CD4-positive, alpha-beta T cell (primary cell): ENCODE measurements at regions of chr2 and their contacts with region 1.

Region 1: GRCh38 chr2:70137519-70137918 is 50.2 kb downstream of the PCBP1 start:
- DNase-seq: peak in 5 of 14 experiments; percentile 20 to 60 (median 53)
- ATAC-seq: no peak
- H3K4me3 ChIP-seq: no peak overlapping the region
- H3K4me3 Mint-ChIP-seq: peak overlapping the region; percentile 88
- H3K27ac ChIP-seq: peak overlapping the region; percentile 39 to 62
- H3K27ac Mint-ChIP-seq: peak overlapping the region; percentile 96
- H3K4me1 ChIP-seq: peaks cover 95% of the 10 kb centered on the region
- H3K4me1 Mint-ChIP-seq: peaks cover 82% of the 10 kb centered on the region
- H3K27me3 ChIP-seq: no peaks in the 10 kb centered on the region
- H3K27me3 Mint-ChIP-seq: no peaks in the 10 kb centered on the region
- CTCF ChIP-seq: no peak

Region 2: GRCh38 chr2:70124983-70125480 is 12.5 kb before region 1 on chr2:
- CTCF ChIA-PET with region 1: interaction called, 23 read pairs
- POLR2A ChIA-PET with region 1: interaction called, 382 read pairs
- intact Hi-C with region 1: loop called (anchors 1 kb)
- DNase-seq: peak; percentile 57 to 88 (median 62)
- ATAC-seq: peak; percentile 59
- H3K4me3 ChIP-seq: peak overlapping the region; percentile 83
- H3K4me3 Mint-ChIP-seq: peak overlapping the region; percentile 93
- H3K27ac ChIP-seq: peak overlapping the region; percentile 92 to 99
- H3K27ac Mint-ChIP-seq: peak overlapping the region; percentile 99
- H3K4me1 ChIP-seq: peaks cover 72% of the 10 kb centered on the region
- H3K4me1 Mint-ChIP-seq: peaks cover 76% of the 10 kb centered on the region
- H3K27me3 ChIP-seq: no peaks in the 10 kb centered on the region
- H3K27me3 Mint-ChIP-seq: no peaks in the 10 kb centered on the region
- CTCF ChIP-seq: no peak